Caco-2 (cell line): ENCODE measurements at regions of chr3 and their contacts with region 1.

Region 1: DNA sequence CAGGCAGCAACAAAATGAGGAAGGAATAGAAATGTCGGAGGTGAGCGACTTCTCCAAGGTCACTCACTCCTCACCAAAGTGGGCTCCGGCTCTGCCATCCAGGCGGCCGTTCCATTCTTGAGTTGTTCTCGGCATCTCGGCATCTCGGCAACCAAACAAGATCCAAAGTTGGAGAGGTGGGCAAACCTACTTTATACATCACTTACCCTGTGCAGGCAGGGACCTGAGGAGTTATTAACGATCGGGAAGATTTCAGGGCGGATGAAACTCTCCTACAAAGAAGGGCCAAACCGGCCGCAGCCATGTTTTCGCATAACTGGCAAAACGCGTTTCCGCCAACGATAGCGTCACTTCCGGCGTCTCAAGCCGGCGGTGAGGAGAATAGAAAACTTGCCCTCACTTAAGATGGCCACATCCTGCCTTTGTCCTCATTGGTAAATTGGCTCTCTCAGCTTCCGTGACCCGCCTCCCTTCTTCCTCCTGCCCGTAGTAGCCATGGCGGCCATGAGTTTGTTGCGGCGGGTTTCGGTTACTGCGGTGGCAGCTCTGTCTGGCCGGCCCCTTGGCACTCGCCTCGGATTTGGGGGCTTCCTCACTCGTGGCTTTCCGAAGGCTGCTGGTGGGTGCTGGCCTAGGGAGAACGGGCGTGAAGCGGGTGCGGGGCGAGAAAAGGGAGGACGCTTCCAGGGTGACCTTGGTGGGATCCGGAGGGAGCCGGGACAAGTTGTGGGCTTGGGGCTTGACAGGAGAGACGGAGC is at the starts of genes MRPL47 and NDUFB5:
- DNase-seq: peak; percentile 90 to 91
- H3K4me3 ChIP-seq: peak within 1 kb of the TSS; percentile 76
- H3K4me3 Mint-ChIP-seq: peak within 1 kb of the TSS; percentile 97
- H3K27ac Mint-ChIP-seq: peak within 1 kb of the TSS; percentile 99
- H3K4me1 ChIP-seq: peaks cover 7% of the 10 kb centered on the region; the same call in 1 of the 2 replicates
- H3K4me1 Mint-ChIP-seq: no peaks in the 10 kb centered on the region
- H3K27me3 ChIP-seq: no peaks in the 10 kb centered on the region
- H3K27me3 Mint-ChIP-seq: no peaks in the 10 kb centered on the region
- CTCF ChIP-seq: no peak
- total RNA-seq, gene MRPL47: 69.3 and 71.3 TPM in 2 replicates
- total RNA-seq, gene NDUFB5: 78.8 and 81.2 TPM in 2 replicates

Region 2: DNA sequence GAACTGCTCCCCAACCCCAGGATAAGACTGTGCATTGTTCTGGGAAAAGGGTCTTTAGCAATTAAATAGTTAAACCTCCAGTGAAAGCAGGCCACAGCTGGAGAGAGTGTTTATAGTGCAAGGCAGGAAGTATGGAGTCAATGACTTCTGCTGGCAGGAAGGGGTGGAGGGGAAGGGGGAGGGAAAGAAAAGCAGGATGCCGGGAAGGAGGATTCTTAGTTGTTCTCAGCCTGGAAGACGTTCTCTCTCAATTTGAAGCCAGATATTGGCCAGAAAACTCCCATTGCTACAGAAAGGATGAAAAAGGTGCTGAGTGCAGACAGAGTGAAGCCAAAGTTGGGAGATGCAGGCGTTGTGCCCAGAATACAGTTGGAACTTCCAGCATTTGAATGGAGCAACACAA is 77.5 kb before region 1 on chr3:
- CTCF ChIA-PET with region 1: no interaction called
- POLR2A ChIA-PET with region 1: no interaction called
- intact Hi-C with region 1: no loop called
- DNase-seq: no peak
- H3K4me3 ChIP-seq: no peak overlapping the region
- H3K4me3 Mint-ChIP-seq: no peak overlapping the region
- H3K27ac Mint-ChIP-seq: no peak overlapping the region
- H3K4me1 ChIP-seq: no peaks in the 10 kb centered on the region
- H3K4me1 Mint-ChIP-seq: no peaks in the 10 kb centered on the region
- H3K27me3 ChIP-seq: no peaks in the 10 kb centered on the region
- H3K27me3 Mint-ChIP-seq: peaks cover 3% of the 10 kb centered on the region
- CTCF ChIP-seq: no peak

Region 3: GRCh38 chr3:179642871-179643270 is 38.4 kb after region 1 on chr3:
- CTCF ChIA-PET with region 1: no interaction called
- POLR2A ChIA-PET with region 1: interaction called, 10 read pairs
- intact Hi-C with region 1: no loop called
- DNase-seq: no peak
- H3K4me3 ChIP-seq: no peak overlapping the region
- H3K4me3 Mint-ChIP-seq: no peak overlapping the region
- H3K27ac Mint-ChIP-seq: no peak overlapping the region
- H3K4me1 ChIP-seq: peaks cover 23% of the 10 kb centered on the region
- H3K4me1 Mint-ChIP-seq: peaks cover 6% of the 10 kb centered on the region
- H3K27me3 ChIP-seq: no peaks in the 10 kb centered on the region
- H3K27me3 Mint-ChIP-seq: no peaks in the 10 kb centered on the region
- CTCF ChIP-seq: no peak

Region 4: DNA sequence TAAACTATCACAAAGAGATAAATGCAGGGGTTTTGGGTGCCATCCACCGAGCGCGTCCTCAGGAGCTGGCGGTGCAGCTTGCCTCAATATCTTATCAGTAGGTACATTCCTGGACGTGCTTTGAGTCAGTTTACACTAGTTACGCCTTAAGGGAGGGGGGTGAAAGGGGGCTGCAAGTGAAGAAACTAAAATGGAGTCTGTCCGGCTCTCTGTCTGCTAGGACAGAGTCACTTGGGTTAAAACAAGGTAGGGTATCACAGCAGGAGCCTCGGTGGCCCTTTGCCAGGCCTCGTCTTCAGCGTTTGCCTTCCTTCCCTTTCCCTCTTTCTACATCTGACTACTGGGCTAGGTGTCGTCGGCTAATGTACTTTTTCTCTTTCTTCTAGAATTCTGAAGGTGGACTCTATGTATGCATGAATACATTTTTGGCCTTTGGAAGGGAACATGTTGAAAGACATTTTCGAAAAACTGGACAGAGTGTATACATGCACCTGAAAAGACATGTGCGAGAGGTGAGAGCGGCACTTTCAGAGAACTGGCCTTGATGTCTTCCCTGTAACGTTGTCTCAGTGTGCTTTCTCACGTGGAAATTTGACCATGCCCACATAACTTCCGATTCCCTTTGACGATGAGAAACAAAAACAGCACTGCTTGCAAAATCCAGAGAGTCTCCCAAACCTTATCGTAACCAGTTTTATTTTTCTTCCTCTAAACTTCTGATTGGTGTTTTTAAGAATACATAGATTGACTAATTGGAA is 77.2 kb after region 1 on chr3:
- CTCF ChIA-PET with region 1: no interaction called
- POLR2A ChIA-PET with region 1: no interaction called
- intact Hi-C with region 1: loop called (anchors 2 kb)
- DNase-seq: peak; percentile 46 to 53
- H3K4me3 ChIP-seq: no peak overlapping the region
- H3K4me3 Mint-ChIP-seq: peak overlapping the region; percentile 64
- H3K27ac Mint-ChIP-seq: peak overlapping the region; percentile 97
- H3K4me1 ChIP-seq: peaks cover 29% of the 10 kb centered on the region
- H3K4me1 Mint-ChIP-seq: peaks cover 34% of the 10 kb centered on the region
- H3K27me3 ChIP-seq: no peaks in the 10 kb centered on the region
- H3K27me3 Mint-ChIP-seq: no peaks in the 10 kb centered on the region
- CTCF ChIP-seq: no peak